Activated CD4-positive, alpha-beta memory T cell treated with anti-CD3 and anti-CD28 coated beads, Interleukin-2, amount 10 ng/mL, durations not matched to agents 7 days and 5 days (primary cell): ENCODE measurements at regions of chr6 and their contacts with region 1.

Region 1: DNA sequence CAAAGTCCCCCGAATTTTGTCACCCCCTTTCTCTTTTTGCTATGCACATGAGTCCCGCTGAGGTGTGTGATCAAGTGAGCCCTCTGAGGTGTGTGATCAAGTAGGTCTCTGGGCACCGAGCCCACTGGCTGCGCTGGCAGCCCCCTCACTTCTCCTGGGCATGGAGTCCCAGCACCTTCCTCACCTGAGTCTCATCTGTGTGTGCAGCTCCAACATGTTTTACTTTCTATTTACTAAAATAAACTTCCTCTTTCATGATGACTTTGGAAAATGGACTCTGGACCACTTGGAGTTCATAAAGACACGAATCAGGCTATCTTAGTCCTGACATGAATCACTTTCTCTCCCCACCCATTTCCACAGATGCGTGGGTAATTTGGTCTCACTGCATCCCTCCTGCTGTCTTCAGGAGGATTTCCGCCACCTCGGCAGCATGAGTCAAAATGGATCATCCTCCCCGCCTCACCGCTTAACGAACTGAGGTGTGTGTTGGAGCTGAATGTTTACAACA is 39.8 kb downstream of the PRDM1 start:
- DNase-seq: peak; percentile 81
- H3K4me3 Mint-ChIP-seq: peak overlapping the region; percentile 63
- H3K27ac Mint-ChIP-seq: peak overlapping the region; percentile 79
- H3K4me1 Mint-ChIP-seq: peaks cover 55% of the 10 kb centered on the region
- H3K27me3 Mint-ChIP-seq: peaks cover 2% of the 10 kb centered on the region

Region 2: GRCh38 chr6:105317607-105318533 is 808.1 kb before region 1 on chr6:
- CTCF ChIA-PET with region 1: no interaction called
- POLR2A ChIA-PET with region 1: no interaction called
- DNase-seq: no peak
- H3K4me3 Mint-ChIP-seq: no peak overlapping the region
- H3K27ac Mint-ChIP-seq: no peak overlapping the region
- H3K4me1 Mint-ChIP-seq: no peaks in the 10 kb centered on the region
- H3K27me3 Mint-ChIP-seq: no peaks in the 10 kb centered on the region

Region 3: GRCh38 chr6:105967917-105968584 is 157.9 kb before region 1 on chr6:
- CTCF ChIA-PET with region 1: no interaction called
- POLR2A ChIA-PET with region 1: no interaction called
- DNase-seq: no peak
- H3K4me3 Mint-ChIP-seq: no peak overlapping the region
- H3K27ac Mint-ChIP-seq: no peak overlapping the region
- H3K4me1 Mint-ChIP-seq: peaks cover 3% of the 10 kb centered on the region
- H3K27me3 Mint-ChIP-seq: no peaks in the 10 kb centered on the region

Region 4: GRCh38 chr6:106103728-106104109 is 22.3 kb before region 1 on chr6:
- CTCF ChIA-PET with region 1: no interaction called
- POLR2A ChIA-PET with region 1: interaction called, 27 read pairs
- DNase-seq: peak; percentile 63
- H3K4me3 Mint-ChIP-seq: peak overlapping the region; percentile 87
- H3K27ac Mint-ChIP-seq: peak overlapping the region; percentile 97
- H3K4me1 Mint-ChIP-seq: peaks cover 76% of the 10 kb centered on the region
- H3K27me3 Mint-ChIP-seq: no peaks in the 10 kb centered on the region

Region 5: DNA sequence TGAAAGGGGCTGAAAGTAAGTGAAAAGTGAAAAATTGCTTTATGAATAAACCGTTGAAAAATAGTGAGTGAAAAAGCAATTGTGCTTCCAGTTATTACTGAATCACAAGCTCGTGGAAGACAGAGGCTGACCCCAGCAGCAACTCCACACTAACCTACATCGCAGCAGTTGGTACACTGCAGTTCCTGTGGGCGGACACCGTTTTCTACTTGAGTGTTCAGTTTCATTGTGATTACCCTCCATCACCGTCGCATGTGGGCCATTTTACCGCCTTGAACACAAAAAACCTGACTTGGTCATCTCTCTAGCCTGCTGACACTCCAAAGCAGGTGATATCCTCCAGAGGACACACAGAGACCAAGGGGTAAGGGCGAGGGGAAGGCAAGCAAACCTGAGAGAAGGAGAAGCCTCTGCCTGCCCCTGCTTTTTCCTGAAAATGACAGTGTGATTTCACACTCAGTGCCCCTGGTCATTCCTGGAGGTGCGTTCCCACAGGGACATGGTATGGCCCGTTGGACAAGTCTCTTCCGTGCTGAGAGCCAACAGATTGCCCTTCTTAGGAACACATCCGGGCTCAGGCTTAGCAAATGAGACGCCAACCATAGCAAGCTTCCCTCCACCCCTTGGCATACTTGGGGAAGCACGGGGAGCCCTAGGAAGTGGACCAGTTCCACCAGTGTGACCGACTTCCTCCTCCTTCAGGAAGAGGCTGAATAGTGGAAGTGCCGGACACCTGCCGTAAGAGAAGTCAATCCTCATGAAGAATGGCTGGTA is 11.3 kb before region 1 on chr6:
- CTCF ChIA-PET with region 1: interaction called, 5 read pairs
- POLR2A ChIA-PET with region 1: interaction called, 29 read pairs
- DNase-seq: peak; percentile 77
- H3K4me3 Mint-ChIP-seq: peak overlapping the region; percentile 36
- H3K27ac Mint-ChIP-seq: peak overlapping the region; percentile 85
- H3K4me1 Mint-ChIP-seq: peaks cover 95% of the 10 kb centered on the region
- H3K27me3 Mint-ChIP-seq: peaks cover 5% of the 10 kb centered on the region